Esophagus muscularis mucosa (tissue), 4 donors: ENCODE measurements at regions of chrX and their contacts with region 1.

Region 1: GRCh38 chrX:149504915-149505651 is at the start of gene IDS:
- DNase-seq: peak; percentile 97
- H3K4me3 ChIP-seq: peak within 1 kb of the TSS; percentile 64 to 81 (median 70)
- H3K27ac ChIP-seq: peak within 1 kb of the TSS; percentile 80 to 91 (median 91)
- H3K4me1 ChIP-seq: peaks cover 0 to 26% (median 16%) of the 10 kb centered on the region in 4 donors
- H3K27me3 ChIP-seq: no peaks in the 10 kb centered on the region
- CTCF ChIP-seq: no peak
- EP300 ChIP-seq: no peak
- POLR2A ChIP-seq: peak; percentile 82
- total RNA-seq, gene IDS: 80.2 to 91.0 (median 86.4) TPM

Region 2: GRCh38 chrX:147911192-147912022 is 1593.7 kb before region 1 on chrX and contains the start of gene FMR1:
- intact Hi-C with region 1: loop called (anchors 10 kb)
- DNase-seq: peak; percentile 96
- H3K4me3 ChIP-seq: peak within 1 kb of the TSS; percentile 68 to 78 (median 72)
- H3K27ac ChIP-seq: peak within 1 kb of the TSS; percentile 89 to 91 (median 90)
- H3K4me1 ChIP-seq: peaks cover 2 to 31% (median 21%) of the 10 kb centered on the region in 4 donors
- H3K27me3 ChIP-seq: no peaks in the 10 kb centered on the region
- CTCF ChIP-seq: no peak
- EP300 ChIP-seq: no peak
- POLR2A ChIP-seq: no peak
- total RNA-seq, gene FMR1: 27.5 to 30.2 (median 28.2) TPM